ENCODE measurements at regions of chr10 and their contacts with region 1.

Region 1: GRCh38 chr10:97553575-97554031 is 19.0 kb upstream of the ANKRD2 start:
- DNase-seq: peak; percentile 82

Region 2: DNA sequence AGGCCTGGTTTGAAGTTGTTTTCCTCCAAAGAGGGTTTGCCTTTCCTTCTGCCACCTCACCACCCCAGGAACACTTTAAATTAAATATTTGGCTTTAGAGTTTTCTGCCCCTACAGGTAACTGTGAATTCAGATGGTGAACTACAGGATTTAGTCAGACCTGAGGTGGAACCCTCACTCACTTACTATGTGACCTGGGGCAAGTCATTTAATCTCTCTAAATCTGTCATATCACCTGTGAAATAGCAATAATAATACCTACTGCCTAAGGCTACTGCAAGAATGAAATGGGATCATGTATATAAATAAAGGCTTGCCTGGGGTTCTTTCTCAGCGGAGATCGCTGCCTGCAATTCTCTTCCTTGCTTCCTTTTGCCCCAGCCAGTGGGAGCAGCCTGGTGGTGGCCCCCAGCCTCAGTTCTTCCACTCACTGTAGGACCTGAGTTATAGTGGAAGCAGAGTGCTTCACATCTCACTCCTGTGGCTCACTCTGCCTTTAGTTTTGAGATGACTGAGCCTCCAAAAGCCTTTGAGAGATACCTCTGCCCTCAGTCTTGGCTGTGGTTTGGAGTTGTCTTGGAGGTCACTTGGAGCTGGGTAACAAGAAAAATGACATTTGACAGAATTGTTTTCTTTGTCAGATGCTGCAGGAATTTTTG is 12.9 kb after region 1 on chr10:
- CTCF ChIA-PET with region 1: interaction called, 10 read pairs
- POLR2A ChIA-PET with region 1: interaction called, 4 read pairs
- DNase-seq: no peak

Region 3: DNA sequence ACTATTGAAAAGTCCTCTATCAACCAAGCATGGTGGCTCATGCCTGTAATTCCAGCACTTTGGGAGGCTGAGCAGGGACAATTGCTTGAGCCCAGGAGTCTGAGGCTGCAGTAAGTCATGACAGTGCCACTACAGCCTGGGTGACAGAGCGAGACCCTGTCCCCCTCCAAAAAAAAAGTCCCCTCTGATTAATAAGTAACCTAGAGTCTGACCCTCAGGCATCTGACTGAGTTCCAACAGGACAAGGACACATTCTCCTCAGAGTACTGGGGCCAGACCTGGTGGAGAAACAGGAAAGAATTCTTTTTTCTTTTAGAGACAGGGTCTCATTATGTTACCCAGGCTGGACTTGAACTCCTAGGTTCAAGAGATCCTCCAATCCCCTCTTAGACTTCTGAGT is 69.7 kb after region 1 on chr10:
- CTCF ChIA-PET with region 1: no interaction called
- POLR2A ChIA-PET with region 1: no interaction called
- DNase-seq: no peak